ENCODE measurements at regions of chr2 and their contacts with region 1.

Region 1: GRCh38 chr2:201769666-201770373 is 10.9 kb downstream of the ALS2 start:
- DNase-seq: no peak

Region 2: GRCh38 chr2:200662738-200663137 is 1107.1 kb before region 1 on chr2:
- intact Hi-C with region 1: no loop called
- DNase-seq: no peak

Region 3: DNA sequence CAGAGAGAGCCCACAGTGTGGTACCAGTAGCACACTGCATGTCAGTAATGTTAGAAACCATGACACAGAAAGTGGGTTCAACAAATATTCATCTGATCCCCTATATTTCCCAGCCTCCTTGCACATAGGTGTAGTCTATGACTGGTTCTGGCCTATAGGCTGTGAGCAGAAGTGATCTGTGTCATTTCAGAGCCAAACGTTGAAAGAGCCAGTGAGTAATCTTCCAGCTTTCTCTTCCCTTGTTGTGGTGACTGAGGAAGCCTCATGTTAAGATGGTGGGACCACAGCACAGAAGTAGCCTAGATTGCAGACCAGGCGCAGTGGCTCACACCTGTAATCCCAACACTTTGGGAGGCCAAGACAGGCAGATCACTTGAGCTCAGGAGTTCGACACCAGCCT is 130.6 kb before region 1 on chr2:
- intact Hi-C with region 1: loop called in 1 of 2 experiments (anchors 5 kb)
- DNase-seq: no peak

Region 4: GRCh38 chr2:202064171-202064880 is 294.5 kb after region 1 on chr2:
- intact Hi-C with region 1: no loop called
- DNase-seq: no peak

Measured in posterior vena cava (tissue), 2 donors.